ENCODE measurements at regions of chr3 and their contacts with region 1.

Region 1: DNA sequence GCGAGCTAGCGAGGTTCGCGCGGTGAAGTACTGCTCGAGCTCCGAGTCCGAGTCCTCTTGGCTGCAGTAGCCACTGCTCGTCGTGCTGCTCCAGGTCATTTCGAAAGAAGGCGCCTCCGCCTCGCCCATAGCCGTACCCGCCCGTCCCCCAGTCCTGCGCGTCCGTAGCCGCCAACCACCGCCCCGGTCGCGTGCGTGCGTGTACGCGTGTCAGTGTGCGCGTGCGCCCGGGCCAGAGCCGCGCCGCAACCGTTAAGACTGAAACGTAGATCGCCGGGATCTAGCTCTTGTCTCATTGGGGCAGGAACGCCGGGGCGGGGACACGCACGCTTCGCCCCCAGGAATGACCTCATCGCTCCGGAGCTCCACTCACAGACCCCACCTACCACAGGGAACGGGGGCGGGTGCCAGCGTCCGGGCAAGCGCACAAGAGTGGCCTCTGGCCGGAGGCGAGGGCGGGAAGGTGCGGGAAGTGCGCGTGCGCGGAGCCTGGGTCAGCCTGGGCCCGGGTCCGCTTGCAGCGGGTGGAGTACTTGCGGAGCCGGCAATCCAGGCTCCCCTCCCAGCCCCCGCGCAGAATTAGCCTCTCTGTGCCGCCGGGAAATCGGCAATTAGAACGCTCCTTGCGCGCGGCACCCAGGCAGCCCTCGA is 3.3 kb downstream of the RASSF1 start:
- DNase-seq: peak; percentile 100
- ATAC-seq: peak; percentile 79
- H3K4me3 Mint-ChIP-seq: peak overlapping the region; percentile 88
- H3K27ac Mint-ChIP-seq: peak overlapping the region; percentile 91
- H3K4me1 Mint-ChIP-seq: peaks cover 44% of the 10 kb centered on the region
- H3K27me3 Mint-ChIP-seq: no peaks in the 10 kb centered on the region
- CTCF ChIP-seq: no peak

Region 2: GRCh38 chr3:50292159-50293078 is 44.9 kb before region 1 on chr3 and contains the start of gene IFRD2:
- CTCF ChIA-PET with region 1: interaction called, 4 read pairs
- POLR2A ChIA-PET with region 1: interaction called, 20 read pairs
- intact Hi-C with region 1: no loop called
- DNase-seq: peak; percentile 98
- ATAC-seq: peak; percentile 98
- H3K4me3 Mint-ChIP-seq: peak within 1 kb of the TSS; percentile 95
- H3K27ac Mint-ChIP-seq: peak within 1 kb of the TSS; percentile 93
- H3K4me1 Mint-ChIP-seq: peaks cover 14% of the 10 kb centered on the region
- H3K27me3 Mint-ChIP-seq: no peaks in the 10 kb centered on the region
- CTCF ChIP-seq: no peak
- total RNA-seq, gene IFRD2: 132 to 133 TPM

Region 3: DNA sequence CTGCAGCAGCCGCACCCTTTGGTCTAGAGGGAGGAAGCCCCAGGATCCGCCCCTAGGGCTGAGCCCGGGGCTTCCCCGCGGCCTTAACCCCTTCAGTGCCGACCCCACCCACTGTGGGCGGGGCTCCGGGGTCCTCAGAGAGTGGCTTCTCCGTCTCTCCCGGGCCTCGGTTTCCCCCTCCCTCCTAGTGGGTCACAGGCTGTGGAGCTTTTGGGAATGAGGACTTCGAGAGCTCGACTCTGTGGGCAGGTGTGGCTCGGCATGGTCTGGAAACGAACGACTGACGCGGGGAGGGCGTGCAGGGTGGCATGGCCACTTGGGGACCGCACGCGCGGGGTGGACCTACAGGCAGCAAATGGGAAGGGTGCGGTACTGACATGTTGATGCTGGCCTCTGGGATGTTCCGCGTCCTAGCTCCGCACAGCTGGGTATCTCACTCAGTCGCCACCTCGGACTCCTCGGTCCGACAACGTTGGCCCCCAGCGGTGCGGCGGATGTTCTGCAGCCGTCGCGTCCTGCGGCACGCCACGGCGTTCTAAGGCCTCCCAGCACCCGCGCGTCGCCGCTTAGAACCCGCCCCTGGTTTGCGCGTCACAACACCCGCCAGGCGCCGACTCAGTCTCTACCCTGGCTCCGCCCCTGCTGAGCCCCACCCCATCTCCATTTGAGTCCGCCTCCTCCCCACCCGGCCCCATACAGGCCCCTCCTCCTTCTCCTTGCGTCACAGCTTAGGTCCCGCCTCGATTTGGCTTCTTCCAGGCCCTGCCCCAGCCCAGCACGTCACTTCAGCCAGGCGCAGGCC is 38.3 kb before region 1 on chr3 and contains the starts of genes HYAL3 and NAA80:
- CTCF ChIA-PET with region 1: interaction called, 3 read pairs
- POLR2A ChIA-PET with region 1: interaction called, 20 read pairs
- intact Hi-C with region 1: no loop called
- DNase-seq: peak; percentile 100
- ATAC-seq: peak; percentile 92
- H3K4me3 Mint-ChIP-seq: peak within 1 kb of the TSS; percentile 99
- H3K27ac Mint-ChIP-seq: peak within 1 kb of the TSS; percentile 98
- H3K4me1 Mint-ChIP-seq: peaks cover 17% of the 10 kb centered on the region
- H3K27me3 Mint-ChIP-seq: no peaks in the 10 kb centered on the region
- CTCF ChIP-seq: peak; percentile 65
- total RNA-seq, gene HYAL3: 3.3 to 4.1 TPM
- total RNA-seq, gene NAA80: 23.2 to 23.4 TPM

Region 4: GRCh38 chr3:50321336-50322114 is 15.8 kb before region 1 on chr3:
- CTCF ChIA-PET with region 1: interaction called, 40 read pairs
- POLR2A ChIA-PET with region 1: interaction called, 126 read pairs
- intact Hi-C with region 1: no loop called
- DNase-seq: peak; percentile 89
- ATAC-seq: peak; percentile 73
- H3K4me3 Mint-ChIP-seq: peak overlapping the region; percentile 78
- H3K27ac Mint-ChIP-seq: peak overlapping the region; percentile 94
- H3K4me1 Mint-ChIP-seq: peaks cover 37% of the 10 kb centered on the region
- H3K27me3 Mint-ChIP-seq: no peaks in the 10 kb centered on the region
- CTCF ChIP-seq: peak; percentile 64

Region 5: DNA sequence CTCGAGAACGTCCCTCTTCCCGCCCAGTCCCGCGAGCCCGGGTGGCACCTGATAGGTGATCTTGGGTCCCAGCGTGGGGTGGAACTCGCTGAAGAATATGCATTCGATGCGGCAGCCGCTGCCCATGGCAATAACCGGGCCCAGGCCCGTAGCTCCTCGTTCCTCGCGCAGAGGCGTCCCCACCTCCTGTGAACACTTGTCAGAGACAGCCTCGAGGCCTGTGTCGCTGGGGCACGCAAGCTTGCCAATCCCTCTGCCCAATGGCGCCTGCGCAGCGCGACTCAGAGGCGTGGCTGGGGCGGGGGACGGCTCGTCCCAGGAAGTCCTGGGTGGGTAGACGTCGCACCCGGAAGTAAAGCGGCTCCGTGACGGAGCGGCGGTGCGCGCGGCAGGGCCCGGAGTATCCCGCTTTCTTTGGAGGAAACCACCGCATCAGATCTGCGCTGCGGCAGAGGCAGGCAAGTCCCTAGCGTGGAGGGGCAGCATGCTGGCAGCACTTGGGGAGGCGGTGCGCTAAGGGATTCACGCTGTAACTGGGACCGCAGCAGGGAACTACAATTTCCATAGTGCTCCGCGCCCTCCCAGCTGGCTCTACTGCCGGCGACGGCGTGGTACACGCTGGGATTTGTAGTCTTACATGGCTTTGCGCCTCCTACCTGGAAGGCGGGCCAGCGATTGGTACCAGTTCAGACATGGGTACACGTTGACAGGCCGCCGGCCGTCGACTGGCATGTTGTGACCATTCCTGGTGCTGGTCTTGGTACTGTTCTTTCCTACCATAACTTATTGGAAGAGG is 13.4 kb after region 1 on chr3 and contains the starts of genes CYB561D2 and NPRL2:
- CTCF ChIA-PET with region 1: interaction called, 18 read pairs
- POLR2A ChIA-PET with region 1: interaction called, 137 read pairs
- intact Hi-C with region 1: no loop called
- DNase-seq: peak; percentile 98
- ATAC-seq: peak; percentile 89
- H3K4me3 Mint-ChIP-seq: peak within 1 kb of the TSS; percentile 91
- H3K27ac Mint-ChIP-seq: peak within 1 kb of the TSS; percentile 96
- H3K4me1 Mint-ChIP-seq: peaks cover 56% of the 10 kb centered on the region
- H3K27me3 Mint-ChIP-seq: no peaks in the 10 kb centered on the region
- CTCF ChIP-seq: no peak
- total RNA-seq, gene CYB561D2: 17.1 to 18.2 TPM
- total RNA-seq, gene NPRL2: 41.3 to 44.7 TPM

Region 6: DNA sequence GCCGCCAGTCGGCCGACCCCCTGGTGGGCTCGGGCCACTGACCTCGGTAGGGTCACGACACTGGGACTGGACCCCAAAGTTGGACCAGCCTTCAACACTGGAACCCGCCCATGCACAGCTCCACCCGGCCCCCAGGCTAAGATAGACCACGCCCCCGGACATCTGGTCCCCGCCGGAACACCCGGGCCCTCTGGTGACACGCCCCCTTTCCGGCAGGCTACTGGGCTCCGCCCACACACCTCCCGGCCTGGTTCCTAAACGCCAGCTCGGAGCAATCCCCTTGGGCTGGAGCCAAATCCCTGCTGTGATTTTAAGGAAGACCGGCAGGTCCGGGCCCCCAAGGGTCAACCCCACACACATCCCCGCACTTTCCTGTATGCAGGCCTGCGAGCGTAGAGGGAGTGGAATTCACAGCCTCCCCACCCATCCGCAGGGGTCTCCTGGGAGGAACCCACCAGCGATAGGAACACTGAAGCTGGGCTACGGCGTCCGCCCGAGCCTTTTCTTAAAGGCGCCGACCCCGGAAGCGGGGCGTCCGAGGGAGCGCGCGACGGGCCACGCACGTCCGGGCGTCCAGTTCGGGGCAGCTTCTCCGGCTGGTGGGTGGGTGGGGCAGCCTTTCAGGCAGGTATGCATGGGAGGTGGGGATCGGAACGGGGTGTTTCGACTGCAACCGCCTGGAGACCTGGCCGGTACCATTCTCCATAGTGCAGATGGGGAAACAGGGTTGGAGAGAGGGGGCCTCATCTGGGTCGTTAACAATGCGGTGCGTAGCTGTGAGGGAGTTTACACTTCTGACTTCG is 231.8 kb after region 1 on chr3 and contains the start of gene HEMK1:
- CTCF ChIA-PET with region 1: interaction called, 6 read pairs
- POLR2A ChIA-PET with region 1: interaction called, 61 read pairs
- intact Hi-C with region 1: no loop called
- DNase-seq: peak; percentile 99
- ATAC-seq: peak; percentile 38
- H3K4me3 Mint-ChIP-seq: peak within 1 kb of the TSS; percentile 91
- H3K27ac Mint-ChIP-seq: peak within 1 kb of the TSS; percentile 98
- H3K4me1 Mint-ChIP-seq: peaks cover 47% of the 10 kb centered on the region
- H3K27me3 Mint-ChIP-seq: peaks cover 2% of the 10 kb centered on the region
- CTCF ChIP-seq: no peak
- total RNA-seq, gene HEMK1: 97.1 to 101 TPM

Region 7: DNA sequence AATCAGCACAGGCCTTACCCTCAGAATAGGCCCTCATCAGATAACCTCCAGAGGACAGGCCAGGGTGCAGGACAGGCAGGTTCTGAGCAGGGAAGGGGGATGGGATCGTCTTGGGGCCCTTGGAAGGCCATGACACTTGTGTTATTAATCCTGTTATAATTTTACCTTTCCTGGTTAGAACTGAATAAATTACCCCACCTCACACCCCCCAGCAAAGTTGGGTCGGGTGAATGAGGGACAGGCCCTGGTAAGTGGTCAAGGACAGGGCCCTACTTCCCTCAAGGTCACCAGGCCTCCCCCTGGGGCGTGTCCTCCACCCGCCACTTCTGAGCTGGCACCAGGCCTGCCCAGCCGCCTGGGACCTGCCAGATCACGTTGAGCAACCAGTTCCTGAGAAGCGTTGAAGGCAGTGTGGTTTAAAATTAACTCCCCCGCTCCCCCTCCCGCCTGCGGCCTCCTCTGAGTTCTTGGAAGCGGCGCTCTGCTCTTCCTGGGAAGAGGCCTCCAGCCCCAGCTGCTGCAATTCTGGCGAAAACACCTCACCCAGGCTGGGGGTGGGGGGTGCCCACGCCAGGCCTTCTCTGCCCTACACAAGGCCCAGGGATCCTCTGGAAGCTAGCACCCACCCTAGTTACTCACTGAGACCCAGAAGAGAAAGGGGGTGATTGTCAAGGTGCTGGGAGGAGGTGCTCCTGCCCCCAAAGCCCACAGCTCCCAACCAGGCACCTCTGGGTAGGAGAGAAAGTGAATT is 263.7 kb after region 1 on chr3:
- CTCF ChIA-PET with region 1: no interaction called
- POLR2A ChIA-PET with region 1: interaction called, 10 read pairs
- intact Hi-C with region 1: no loop called
- DNase-seq: peak; percentile 98
- ATAC-seq: peak; percentile 59
- H3K4me3 Mint-ChIP-seq: peak overlapping the region; percentile 94
- H3K27ac Mint-ChIP-seq: peak overlapping the region; percentile 100
- H3K4me1 Mint-ChIP-seq: peaks cover 78% of the 10 kb centered on the region
- H3K27me3 Mint-ChIP-seq: no peaks in the 10 kb centered on the region
- CTCF ChIP-seq: no peak

Measured in activated CD8-positive, alpha-beta T cell treated with anti-CD3 and anti-CD28 coated beads for 36 hours (primary cell).